SK-N-SH (cell line): ENCODE measurements at regions of chr1 and their contacts with region 1.

Region 1: GRCh38 chr1:203273206-203273868 is 32.0 kb upstream of the BTG2 start:
- DNase-seq: peak; percentile 86
- H3K4me3 ChIP-seq: peak overlapping the region in 1 of 2 experiments; percentile 31; a peak in 1 of 4 replicates
- H3K27ac ChIP-seq: no peak overlapping the region
- H3K4me1 ChIP-seq: peaks cover 0 to 28% of the 10 kb centered on the region in 2 experiments; a peak in 1 of 4 replicates
- H3K27me3 ChIP-seq: no peaks in the 10 kb centered on the region
- CTCF ChIP-seq: peak; percentile 98
- EP300 ChIP-seq: no peak
- RAD21 ChIP-seq: peak; percentile 93

Region 2: DNA sequence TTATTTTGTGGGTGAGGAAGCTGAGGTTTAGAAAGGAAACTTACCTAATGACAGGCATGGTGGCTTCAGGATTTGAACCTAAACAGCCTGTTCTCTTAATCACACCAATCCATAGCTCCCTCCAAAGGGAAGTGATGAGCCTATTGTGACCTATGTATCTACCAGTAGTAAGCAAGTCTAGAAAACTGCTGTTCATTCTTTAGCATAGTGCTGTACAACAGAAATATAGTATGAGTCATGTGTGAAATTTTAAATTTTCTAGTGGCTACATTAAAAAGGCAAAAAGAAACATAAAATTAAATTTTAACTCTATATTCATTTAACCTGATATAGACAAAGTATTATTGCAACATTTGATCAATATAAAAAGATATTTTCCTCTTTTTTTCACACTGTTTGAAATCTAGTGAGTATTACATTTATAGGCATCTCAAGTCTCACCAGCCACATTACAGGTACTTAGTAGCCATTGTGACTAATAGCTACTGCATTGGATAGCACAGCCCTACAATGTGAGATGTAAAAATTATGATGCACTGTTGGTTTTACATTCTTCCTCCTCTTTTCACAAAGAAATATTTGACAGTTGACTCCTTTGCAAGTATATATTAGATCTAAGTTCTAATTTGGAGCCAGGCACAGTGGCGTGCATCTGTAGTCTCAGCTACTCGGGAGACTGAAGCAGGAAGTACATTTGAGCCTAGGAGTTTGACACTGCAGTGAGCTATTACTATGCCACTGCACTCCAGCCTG is 1427.8 kb before region 1 on chr1:
- CTCF ChIA-PET with region 1: no interaction called
- POLR2A ChIA-PET with region 1: no interaction called
- DNase-seq: no peak
- H3K4me3 ChIP-seq: no peak overlapping the region
- H3K27ac ChIP-seq: peak overlapping the region in 1 of 2 experiments; percentile 83; a peak in 2 of 4 replicates
- H3K4me1 ChIP-seq: peaks cover 5 to 25% of the 10 kb centered on the region in 2 experiments
- H3K27me3 ChIP-seq: no peaks in the 10 kb centered on the region
- CTCF ChIP-seq: no peak
- EP300 ChIP-seq: no peak
- RAD21 ChIP-seq: no peak

Region 3: DNA sequence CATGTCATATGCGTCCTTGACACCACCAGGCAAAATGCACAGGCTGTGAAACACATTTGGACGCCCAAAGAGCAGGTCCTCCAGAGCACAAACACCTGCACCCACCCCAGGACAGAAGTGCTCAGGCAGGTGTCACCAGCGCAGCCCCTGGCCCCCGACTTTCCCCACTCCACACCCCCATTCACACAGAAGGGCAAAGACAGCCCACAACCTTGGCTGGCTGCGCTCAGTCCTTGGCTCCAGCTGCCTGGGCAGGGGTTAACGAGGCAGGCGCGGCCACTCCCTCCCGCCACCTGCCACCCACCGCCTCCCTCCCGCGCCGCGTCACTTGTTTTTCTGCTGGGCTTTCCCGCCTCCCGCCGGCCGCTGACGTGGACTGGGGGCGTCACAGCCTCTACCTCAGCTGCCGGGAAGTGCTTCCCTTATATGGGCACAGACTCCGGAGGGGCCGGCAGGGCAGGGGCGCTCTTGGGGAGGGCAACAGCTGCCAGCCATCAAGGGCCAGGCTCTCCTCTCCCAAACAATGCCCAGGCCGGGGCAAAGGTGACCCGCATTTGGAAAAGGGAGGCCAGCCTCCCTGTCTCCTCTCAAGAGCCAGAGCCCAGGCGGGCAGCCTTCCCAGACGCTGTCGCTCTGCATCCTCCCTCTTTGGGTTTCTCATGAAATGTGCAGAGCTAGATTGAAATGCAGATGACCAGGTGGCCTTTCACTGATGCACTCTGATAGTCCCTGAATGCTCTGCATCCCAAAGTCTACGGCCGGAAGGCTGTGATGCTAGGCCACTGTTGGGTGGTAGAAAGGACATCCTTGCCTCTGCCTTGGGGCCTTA is 17.1 kb after region 1 on chr1:
- CTCF ChIA-PET with region 1: interaction called, 108 read pairs
- POLR2A ChIA-PET with region 1: no interaction called
- DNase-seq: peak; percentile 91
- H3K4me3 ChIP-seq: peak overlapping the region in 1 of 2 experiments; percentile 7; a peak in 1 of 4 replicates
- H3K27ac ChIP-seq: peak overlapping the region in 1 of 2 experiments; percentile 76; a peak in 2 of 4 replicates
- H3K4me1 ChIP-seq: peaks cover 0 to 32% of the 10 kb centered on the region in 2 experiments; a peak in 1 of 4 replicates
- H3K27me3 ChIP-seq: peaks cover 10% of the 10 kb centered on the region
- CTCF ChIP-seq: no peak
- EP300 ChIP-seq: no peak
- RAD21 ChIP-seq: no peak

Region 4: GRCh38 chr1:203320591-203321272 is 47.4 kb after region 1 on chr1:
- CTCF ChIA-PET with region 1: interaction called, 61 read pairs
- POLR2A ChIA-PET with region 1: no interaction called
- DNase-seq: no peak
- H3K4me3 ChIP-seq: no peak overlapping the region
- H3K27ac ChIP-seq: no peak overlapping the region
- H3K4me1 ChIP-seq: peaks cover 3 to 39% of the 10 kb centered on the region in 2 experiments; a peak in 1 of 4 replicates
- H3K27me3 ChIP-seq: peaks cover 26% of the 10 kb centered on the region
- CTCF ChIP-seq: no peak
- EP300 ChIP-seq: no peak
- RAD21 ChIP-seq: no peak

Region 5: DNA sequence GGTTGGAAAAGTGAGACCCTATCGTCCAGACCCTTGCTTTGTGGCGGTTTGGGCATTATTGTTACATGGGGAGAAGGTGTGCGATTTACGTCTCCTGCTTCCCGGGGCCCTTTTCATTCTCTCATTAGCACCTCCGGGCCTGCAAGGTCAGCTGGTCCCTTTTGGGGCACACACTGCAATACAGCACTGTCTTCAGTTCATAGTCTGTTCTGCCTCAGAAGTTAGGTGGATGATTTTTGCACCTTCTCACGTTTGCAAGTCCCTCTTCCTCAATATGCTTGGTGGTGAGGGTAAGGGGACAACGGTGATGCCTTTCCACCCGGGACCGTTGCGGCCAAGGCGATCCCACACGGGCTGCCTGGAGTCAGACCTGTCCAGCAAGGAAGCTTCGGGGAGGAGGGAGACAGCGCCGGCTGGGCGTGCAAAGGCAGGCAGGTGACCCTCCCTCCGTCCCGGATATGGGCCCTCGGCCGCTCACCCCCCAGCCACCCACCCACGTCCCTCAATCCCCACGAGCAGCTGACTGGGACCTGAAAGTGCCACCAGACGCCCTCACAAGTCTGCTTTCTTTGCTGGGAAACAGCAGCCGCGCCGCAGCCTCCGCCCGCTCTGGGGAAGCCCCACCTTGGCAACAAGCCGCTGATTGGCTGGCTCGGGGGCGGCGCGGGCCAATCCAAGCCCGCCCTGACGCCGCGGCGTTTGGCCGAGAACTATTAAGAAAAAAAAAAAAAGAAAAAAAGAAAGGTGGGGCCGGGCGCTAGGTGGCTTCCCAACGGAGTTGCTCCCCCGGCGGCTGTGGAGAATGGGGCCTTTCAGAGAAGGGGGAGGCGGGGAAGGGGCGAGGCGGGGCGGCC is 53.7 kb after region 1 on chr1:
- CTCF ChIA-PET with region 1: interaction called, 817 read pairs
- POLR2A ChIA-PET with region 1: interaction called, 14 read pairs
- DNase-seq: peak; percentile 97
- H3K4me3 ChIP-seq: peak overlapping the region; percentile 51 to 71
- H3K27ac ChIP-seq: peak overlapping the region in 1 of 2 experiments; percentile 96; a peak in 2 of 4 replicates
- H3K4me1 ChIP-seq: peaks cover 5 to 43% of the 10 kb centered on the region in 2 experiments; a peak in 2 of 4 replicates
- H3K27me3 ChIP-seq: peaks cover 26% of the 10 kb centered on the region
- CTCF ChIP-seq: no peak
- EP300 ChIP-seq: peak; percentile 29 to 92; a peak in 3 of 4 replicates
- RAD21 ChIP-seq: no peak